Ascending aorta (tissue), 2 donors: ENCODE measurements at regions of chr15 and their contacts with region 1.

Region 1: GRCh38 chr15:52679232-52680040 is at the start of gene ATOSA:
- DNase-seq: peak; percentile 72 to 95
- H3K4me3 ChIP-seq: peak within 1 kb of the TSS; percentile 82 to 84
- H3K27ac ChIP-seq: peak within 1 kb of the TSS; percentile 96 to 97
- H3K4me1 ChIP-seq: peaks cover 4 to 12% of the 10 kb centered on the region in 2 donors
- H3K27me3 ChIP-seq: no peaks in the 10 kb centered on the region
- CTCF ChIP-seq: no peak
- total RNA-seq, gene ATOSA: 29.9 TPM

Region 2: GRCh38 chr15:52179278-52180195 is 499.9 kb before region 1 on chr15:
- intact Hi-C with region 1: loop called (anchors 10 kb)
- DNase-seq: peak; percentile 47 to 91
- H3K4me3 ChIP-seq: peak overlapping the region; percentile 95 to 99
- H3K27ac ChIP-seq: peak overlapping the region; percentile 88 to 95
- H3K4me1 ChIP-seq: peaks cover 0 to 3% of the 10 kb centered on the region in 2 donors
- H3K27me3 ChIP-seq: no peaks in the 10 kb centered on the region
- CTCF ChIP-seq: no peak

Region 3: DNA sequence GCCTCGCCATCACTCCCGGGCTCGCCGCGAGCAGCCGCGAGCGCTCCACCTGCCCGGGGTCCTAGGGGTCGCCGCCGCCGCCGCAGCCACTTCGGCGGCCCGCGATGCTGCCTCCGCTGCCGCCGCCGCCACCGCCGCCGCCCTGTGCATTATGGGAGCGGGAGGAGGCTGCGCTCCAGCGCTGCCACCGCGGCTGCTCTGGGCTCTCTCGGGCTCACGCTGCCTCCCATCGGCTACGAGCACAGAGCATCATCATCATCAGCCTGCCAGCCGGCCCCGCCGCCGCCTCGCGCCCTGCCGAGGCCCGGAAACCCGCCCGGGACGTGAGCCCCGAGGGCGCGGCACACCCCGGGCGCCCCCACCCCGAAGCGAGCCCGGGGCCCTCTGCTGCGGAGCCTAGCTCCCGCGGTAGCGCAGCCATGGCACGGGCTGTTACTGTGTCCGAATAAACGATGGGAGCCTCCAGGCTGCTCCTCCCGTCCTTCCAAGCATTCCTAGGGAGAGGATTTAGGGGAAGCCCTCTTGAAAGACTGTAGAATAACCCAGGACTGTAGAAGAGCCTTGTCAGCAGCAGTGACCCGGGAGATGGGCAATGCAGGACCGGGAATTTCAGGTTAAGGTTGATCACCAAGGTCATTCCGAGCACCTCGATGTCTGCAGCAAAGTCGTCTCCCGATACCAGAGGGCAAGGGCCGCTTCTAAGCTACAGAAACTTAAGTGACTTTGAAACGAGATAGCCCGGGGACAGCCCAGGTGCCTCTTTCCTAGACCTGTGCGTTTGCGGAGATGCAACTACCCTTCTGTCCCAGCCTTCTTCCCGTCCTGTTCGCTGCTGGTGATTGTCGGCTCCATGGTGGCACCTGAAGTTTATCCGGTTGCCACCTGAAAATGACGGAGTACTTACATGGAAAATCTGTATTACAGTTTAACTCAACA is 150.2 kb before region 1 on chr15:
- intact Hi-C with region 1: loop called (anchors 2 kb)
- DNase-seq: peak in 1 of 2 donors; percentile 85
- H3K4me3 ChIP-seq: peak overlapping the region; percentile 86 to 92
- H3K27ac ChIP-seq: peak overlapping the region; percentile 66 to 87
- H3K4me1 ChIP-seq: peaks cover 0 to 6% of the 10 kb centered on the region in 2 donors
- H3K27me3 ChIP-seq: no peaks in the 10 kb centered on the region
- CTCF ChIP-seq: peak in 1 of 3 experiments; percentile 17

Region 4: GRCh38 chr15:52642386-52643361 is 36.8 kb before region 1 on chr15:
- intact Hi-C with region 1: loop called (anchors 5 kb)
- DNase-seq: no peak
- H3K4me3 ChIP-seq: no peak overlapping the region
- H3K27ac ChIP-seq: peak overlapping the region; percentile 28 to 73
- H3K4me1 ChIP-seq: peaks cover 4 to 8% of the 10 kb centered on the region in 2 donors
- H3K27me3 ChIP-seq: no peaks in the 10 kb centered on the region
- CTCF ChIP-seq: no peak

Region 5: DNA sequence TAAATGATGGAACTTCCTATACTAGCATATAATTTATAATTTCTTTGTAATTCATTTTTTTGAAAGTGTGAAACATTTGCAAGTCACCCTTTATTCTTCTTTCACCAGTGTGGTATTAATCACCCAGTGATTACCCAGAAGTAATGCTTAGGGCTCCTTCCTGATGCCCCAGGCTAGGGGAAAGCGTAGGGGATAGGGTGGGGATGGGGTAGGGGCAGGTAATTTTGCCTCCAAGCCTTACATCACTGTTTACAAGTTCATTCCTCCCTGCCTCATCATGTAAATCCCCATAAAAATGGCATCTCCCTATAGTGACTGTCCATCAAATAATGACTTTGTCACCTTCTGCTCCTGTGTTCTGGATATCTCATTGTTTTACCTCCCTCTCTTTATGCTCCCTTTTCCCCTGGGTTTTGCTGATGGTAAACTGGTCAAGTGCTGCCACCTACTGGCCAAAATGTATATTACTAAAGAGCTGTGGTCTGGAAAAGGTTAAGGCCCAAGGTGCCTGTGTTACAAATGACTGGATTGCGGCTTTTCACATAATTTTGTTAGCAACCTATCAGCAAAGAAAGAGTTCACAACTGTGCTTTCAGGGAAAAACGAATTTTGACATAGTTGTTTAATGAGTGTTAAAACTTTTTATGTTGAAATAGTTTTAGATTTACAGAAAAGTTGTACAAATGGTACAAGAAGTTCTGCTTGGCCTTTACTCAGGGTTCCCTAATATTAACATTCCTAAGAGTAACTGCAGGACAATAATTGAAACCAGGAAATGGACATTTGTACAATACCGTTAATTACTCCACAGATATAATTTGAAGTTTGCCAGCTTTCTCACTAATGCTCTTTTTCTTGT is 56.0 kb after region 1 on chr15:
- intact Hi-C with region 1: loop called (anchors 5 kb)
- DNase-seq: peak in 1 of 2 donors; percentile 82
- H3K4me3 ChIP-seq: no peak overlapping the region
- H3K27ac ChIP-seq: no peak overlapping the region
- H3K4me1 ChIP-seq: peaks cover 0 to 7% of the 10 kb centered on the region in 2 donors
- H3K27me3 ChIP-seq: no peaks in the 10 kb centered on the region
- CTCF ChIP-seq: peak; percentile 74 to 88 (median 77)

Region 6: DNA sequence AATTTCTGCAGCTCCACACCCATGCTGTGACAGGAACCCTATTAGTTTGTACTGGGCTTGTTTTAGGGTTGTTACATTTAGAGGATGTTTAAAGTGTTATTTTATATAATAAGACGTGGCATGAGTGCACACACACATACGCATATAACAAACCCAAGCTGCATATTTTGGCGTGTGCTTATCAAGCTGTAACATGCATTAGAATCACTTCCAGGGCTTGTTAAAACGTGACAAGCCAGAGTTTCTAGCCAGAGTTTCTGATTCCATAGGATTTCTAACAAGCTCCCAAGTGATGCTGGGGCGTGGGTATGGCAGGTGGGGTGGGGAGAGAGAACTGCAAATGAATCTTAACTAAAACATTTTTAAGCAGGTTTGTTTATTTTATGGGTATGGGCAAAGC is 93.3 kb after region 1 on chr15:
- intact Hi-C with region 1: no loop called
- DNase-seq: no peak
- H3K4me3 ChIP-seq: no peak overlapping the region
- H3K27ac ChIP-seq: no peak overlapping the region
- H3K4me1 ChIP-seq: no peaks in the 10 kb centered on the region
- H3K27me3 ChIP-seq: no peaks in the 10 kb centered on the region
- CTCF ChIP-seq: no peak